Ascending aorta (tissue), 2 donors: ENCODE measurements at regions of chr22 and their contacts with region 1.

Region 1: GRCh38 chr22:24845041-24845898 is 39.3 kb downstream of the SGSM1 start:
- DNase-seq: peak in 1 of 2 donors; percentile 77
- H3K4me3 ChIP-seq: no peak overlapping the region
- H3K27ac ChIP-seq: peak overlapping the region; percentile 24 to 60
- H3K4me1 ChIP-seq: peaks cover 0 to 5% of the 10 kb centered on the region in 2 donors
- H3K27me3 ChIP-seq: no peaks in the 10 kb centered on the region
- CTCF ChIP-seq: no peak

Region 2: DNA sequence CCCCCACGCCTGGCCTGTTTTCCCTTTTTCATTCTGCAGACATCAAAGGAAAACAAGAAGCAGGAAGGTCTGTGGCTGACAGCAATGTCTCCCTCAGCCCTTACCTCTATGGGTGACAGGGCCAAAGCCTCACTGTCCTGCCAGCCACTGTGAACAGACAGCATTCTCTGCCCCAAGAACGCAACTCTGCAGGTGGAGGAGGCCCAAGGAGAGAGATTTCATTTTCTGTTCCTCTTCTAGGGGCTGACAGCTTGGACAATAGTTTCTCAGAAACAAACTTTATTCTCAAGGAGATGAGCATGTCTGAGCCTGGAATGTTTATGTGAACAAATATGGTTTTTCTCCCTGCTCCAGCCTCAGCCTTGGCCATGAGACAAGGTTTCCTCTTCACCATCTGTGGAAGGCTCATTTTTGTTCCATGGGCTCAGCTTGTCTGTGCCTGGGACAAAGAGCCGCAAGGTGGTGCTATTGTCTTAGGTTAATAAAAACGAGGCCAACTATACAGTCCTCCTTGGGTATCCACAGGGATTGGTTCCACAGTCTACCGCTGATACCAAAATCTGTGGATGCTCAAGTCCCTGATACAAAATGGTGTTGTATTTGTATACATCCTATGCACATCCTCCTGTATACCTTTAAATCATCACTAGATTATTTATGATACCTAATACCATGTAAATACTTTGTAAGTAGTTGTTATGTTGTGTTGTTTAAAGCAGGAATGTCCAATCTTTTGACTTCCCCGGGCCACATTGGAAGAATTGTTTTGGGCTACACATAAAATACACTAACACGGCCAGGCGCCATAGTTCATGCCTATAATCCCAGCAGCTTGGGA is 76.5 kb before region 1 on chr22:
- intact Hi-C with region 1: loop called (anchors 1 kb)
- DNase-seq: peak in 1 of 2 donors; percentile 78
- H3K4me3 ChIP-seq: no peak overlapping the region
- H3K27ac ChIP-seq: no peak overlapping the region
- H3K4me1 ChIP-seq: no peaks in the 10 kb centered on the region
- H3K27me3 ChIP-seq: no peaks in the 10 kb centered on the region
- CTCF ChIP-seq: peak; percentile 43 to 60 (median 53)

Region 3: GRCh38 chr22:24819911-24820461 is 25.3 kb before region 1 on chr22:
- intact Hi-C with region 1: no loop called
- DNase-seq: peak in 1 of 2 donors; percentile 73
- H3K4me3 ChIP-seq: no peak overlapping the region
- H3K27ac ChIP-seq: no peak overlapping the region
- H3K4me1 ChIP-seq: peaks cover 0 to 11% of the 10 kb centered on the region in 2 donors
- H3K27me3 ChIP-seq: no peaks in the 10 kb centered on the region
- CTCF ChIP-seq: no peak